ENCODE measurements at regions of chr5 and their contacts with region 1.

Region 1: DNA sequence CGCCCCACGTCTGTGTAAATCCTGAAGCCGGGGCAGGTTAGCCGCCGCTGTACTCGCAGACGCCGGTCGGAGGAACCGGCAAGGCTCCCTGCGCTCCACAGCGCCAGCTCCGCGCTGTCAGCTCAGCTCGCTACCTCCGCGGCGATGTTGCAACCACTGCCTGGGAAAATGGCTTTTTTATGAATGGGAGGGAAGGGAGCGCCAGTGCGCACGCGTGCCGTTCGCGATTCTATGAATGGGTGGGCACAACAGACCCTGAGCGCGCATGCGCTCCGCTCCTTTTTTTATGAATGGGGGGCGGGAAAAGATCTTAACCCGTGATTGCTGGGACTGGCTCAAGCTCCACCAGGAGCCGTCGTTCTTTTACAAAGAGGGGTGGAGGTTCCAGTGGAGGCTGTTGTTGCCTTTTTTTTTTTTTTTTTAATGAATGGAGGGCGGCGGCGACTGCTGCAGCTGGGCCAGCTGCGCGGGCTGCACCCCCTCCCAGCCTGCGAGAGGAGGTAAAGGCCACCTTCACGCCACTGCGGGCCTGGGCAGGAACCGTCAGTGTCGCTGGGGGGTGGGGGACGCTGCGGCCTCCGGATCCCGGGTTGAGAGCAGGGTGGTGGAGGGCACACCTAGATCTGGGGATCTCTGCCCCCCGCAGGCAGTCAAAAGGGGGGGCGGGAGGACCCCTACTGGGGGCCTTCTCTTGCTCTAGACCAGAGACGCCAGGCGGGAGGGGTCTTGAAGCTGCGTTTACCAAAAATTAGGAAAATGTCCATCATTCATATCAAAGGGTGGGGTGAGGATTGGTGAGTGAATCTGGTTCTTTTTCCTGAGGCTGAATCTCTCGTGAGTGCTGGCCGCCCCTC is at the start of gene SPRY4:
- DNase-seq: peak; percentile 94
- H3K4me3 Mint-ChIP-seq: peak within 1 kb of the TSS; percentile 89
- H3K27ac Mint-ChIP-seq: peak within 1 kb of the TSS; percentile 80
- H3K4me1 Mint-ChIP-seq: peaks cover 32% of the 10 kb centered on the region
- H3K27me3 Mint-ChIP-seq: peaks cover 49% of the 10 kb centered on the region
- total RNA-seq, gene SPRY4: 1.4 and 1.5 TPM in 2 replicates

Region 2: GRCh38 chr5:142151436-142152383 is 173.4 kb before region 1 on chr5:
- intact Hi-C with region 1: loop called (anchors 10 kb)
- DNase-seq: peak; percentile 87
- H3K4me3 Mint-ChIP-seq: no peak overlapping the region
- H3K27ac Mint-ChIP-seq: no peak overlapping the region
- H3K4me1 Mint-ChIP-seq: peaks cover 6% of the 10 kb centered on the region
- H3K27me3 Mint-ChIP-seq: no peaks in the 10 kb centered on the region

Region 3: DNA sequence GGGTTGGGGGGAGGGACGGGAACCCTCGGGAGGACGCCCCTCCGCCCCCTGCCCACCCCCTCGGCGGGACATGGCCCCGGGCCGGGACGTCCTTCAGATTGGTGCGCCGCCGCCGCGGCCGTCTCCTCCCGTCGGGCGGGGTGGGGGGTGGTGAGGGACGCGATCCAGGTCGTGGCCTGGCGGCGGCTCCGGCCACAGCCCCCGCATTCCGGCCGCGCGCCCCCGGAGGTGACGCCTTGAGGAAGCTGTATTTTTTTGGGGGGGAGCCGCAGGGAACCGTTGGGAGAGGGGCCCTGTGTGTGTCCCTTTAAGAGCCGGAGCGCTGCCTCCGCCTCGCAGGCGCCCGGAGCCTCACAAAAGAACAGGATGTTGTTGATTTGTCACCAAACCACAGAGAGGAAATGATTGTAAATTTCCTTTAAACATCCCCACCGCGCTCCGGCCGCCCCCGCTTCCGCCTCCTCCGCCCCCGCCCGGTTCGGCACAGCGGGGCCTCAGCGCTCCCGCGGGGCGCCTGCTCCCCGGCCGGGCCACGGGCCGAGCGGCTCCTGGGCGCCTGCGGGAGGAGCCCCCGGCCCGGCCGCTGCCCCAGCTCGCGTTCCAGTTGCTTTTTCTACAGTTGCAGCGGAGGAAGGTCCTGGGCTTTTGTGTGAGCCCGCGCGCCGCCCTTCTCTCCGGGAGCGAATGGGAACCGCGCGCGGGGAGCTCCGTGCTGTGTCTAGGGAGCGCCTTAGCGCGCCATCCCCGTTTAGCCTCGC is 31.8 kb after region 1 on chr5:
- intact Hi-C with region 1: loop called (anchors 1 kb)
- DNase-seq: peak; percentile 97
- H3K4me3 Mint-ChIP-seq: peak overlapping the region; percentile 79
- H3K27ac Mint-ChIP-seq: peak overlapping the region; percentile 94
- H3K4me1 Mint-ChIP-seq: peaks cover 40% of the 10 kb centered on the region
- H3K27me3 Mint-ChIP-seq: peaks cover 3% of the 10 kb centered on the region

Region 4: DNA sequence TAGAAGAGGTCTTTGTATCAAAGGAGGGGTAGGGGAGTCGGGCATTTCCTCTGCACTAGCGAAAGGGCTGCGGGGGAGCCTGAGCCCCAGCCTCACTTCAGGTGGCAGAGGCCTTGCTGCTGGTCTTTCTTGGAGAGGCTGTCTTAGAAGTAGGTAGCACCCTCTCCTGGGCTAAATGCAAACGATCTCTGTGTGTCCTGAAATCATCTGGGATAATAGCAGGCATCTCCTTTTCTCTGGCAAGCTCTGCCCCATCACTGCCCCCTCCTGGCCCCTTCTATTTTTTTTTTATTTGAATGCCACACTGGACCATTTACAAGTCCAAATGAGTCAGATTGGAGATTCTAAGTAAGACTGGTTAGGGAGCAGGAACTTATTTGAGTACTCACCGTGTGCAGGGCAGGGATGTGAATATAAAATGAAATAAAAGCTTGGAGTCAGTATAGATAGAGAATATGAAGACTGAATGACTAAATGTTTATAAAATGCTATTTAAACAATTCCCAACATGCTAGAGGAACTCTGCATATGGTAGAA is 223.7 kb after region 1 on chr5:
- intact Hi-C with region 1: loop called (anchors 2 kb)
- DNase-seq: peak; percentile 68
- H3K4me3 Mint-ChIP-seq: no peak overlapping the region
- H3K27ac Mint-ChIP-seq: no peak overlapping the region
- H3K4me1 Mint-ChIP-seq: peaks cover 3% of the 10 kb centered on the region
- H3K27me3 Mint-ChIP-seq: peaks cover 31% of the 10 kb centered on the region

Region 5: DNA sequence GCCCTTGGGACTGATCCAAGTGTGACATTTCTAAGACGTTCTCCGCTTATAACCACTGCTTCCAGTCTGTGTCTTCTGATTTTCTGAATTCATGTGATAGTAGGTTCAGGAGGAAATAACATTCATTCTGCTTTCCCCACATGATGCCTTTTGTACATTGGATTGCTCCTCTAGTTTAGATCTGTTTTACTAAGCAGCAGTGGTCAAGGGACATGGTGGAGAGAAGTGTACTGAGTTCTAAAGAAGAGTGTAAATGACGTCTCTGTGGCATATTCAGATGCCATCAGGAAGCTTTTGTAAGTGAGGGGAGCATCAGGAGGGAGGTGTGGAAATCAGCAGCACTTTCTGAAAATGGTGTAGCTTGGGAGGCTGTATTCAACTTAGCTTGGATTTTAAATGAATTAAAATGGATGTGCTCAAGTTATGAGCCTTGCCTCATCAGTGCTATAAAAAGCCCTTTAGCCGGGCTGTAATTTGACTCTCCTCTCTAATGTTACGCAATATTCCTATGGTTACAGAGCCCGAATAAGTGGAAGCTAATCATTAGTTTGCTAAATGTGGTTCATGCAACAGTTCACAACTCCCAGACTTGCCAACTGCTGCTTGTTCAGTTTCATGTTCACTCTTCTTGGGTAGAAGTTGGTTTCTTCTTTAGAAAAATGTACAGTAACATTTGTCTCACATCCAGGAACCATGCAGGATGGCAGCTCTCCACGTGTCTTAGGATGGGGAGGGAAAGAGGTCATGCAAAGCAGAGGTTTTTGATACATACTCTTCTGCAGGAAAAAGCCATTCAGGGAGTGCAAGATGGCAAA is 726.4 kb after region 1 on chr5:
- intact Hi-C with region 1: no loop called
- DNase-seq: no peak
- H3K4me3 Mint-ChIP-seq: no peak overlapping the region
- H3K27ac Mint-ChIP-seq: peak overlapping the region; percentile 70
- H3K4me1 Mint-ChIP-seq: peaks cover 62% of the 10 kb centered on the region
- H3K27me3 Mint-ChIP-seq: no peaks in the 10 kb centered on the region